Activated CD4-positive, alpha-beta memory T cell treated with anti-CD3 and anti-CD28 coated beads, Interleukin-2, amount 10 ng/mL, durations not matched to agents 7 days and 5 days (primary cell): ENCODE measurements at regions of chr17 and their contacts with region 1.

Region 1: DNA sequence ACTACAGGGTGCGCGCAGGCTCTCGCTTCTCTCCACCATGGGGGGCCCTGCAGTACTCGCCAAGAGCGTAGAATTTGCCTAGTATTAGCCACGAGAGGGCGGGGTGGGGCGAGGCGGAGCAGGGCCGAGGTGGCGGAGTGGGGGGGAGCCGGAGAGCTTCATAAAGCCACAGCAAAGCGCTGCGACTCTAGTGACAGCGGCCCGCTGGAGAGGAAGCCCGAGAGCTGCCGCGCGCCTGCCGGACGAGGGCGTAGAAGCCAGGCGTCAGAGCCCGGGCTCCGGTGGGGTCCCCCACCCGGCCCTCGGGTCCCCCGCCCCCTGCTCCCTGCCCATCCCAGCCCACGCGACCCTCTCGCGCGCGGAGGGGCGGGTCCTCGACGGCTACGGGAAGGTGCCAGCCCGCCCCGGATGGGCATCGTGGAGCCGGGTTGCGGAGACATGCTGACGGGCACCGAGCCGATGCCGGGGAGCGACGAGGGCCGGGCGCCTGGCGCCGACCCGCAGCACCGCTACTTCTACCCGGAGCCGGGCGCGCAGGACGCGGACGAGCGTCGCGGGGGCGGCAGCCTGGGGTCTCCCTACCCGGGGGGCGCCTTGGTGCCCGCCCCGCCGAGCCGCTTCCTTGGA is at the start of gene TBX21:
- DNase-seq: peak; percentile 94
- H3K4me3 Mint-ChIP-seq: peak within 1 kb of the TSS; percentile 100
- H3K27ac Mint-ChIP-seq: peak within 1 kb of the TSS; percentile 99
- H3K4me1 Mint-ChIP-seq: peaks cover 68% of the 10 kb centered on the region
- H3K27me3 Mint-ChIP-seq: no peaks in the 10 kb centered on the region
- total RNA-seq, gene TBX21: 58.3 to 61.1 TPM

Region 2: DNA sequence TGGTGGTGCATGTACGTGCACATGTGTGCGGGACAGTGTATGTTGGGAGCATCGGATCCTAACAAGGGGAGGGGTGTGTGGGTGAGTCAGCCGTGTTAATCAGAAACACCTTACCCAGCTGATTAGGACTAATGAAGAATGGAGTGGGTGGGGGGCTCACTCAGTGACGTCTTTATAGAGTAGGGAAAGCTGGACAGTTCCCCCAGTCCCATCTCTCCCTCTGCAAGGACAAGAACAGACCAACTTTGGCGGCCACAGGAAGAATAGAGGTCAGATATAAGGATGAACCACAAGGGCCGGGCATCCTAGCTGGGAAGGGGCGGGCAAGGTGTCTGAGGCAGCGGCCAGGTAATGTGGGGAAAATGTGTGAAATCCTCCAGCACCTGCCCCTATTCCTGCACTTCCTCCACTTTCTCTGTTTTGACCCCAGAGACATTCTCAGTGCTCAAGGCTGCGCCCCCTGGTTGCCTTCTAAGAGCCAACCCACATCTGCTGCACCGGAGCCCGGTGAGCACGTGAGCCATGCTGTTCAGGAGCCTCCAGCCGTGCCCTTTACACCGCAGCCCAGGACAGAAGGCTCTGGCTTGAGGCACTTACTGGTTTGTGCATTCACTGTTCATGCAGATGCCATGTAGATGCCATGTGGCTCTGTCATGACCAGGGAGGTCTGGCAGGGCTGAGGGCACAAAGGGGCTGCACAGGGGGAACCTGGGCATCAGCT is 19.0 kb before region 1 on chr17:
- CTCF ChIA-PET with region 1: interaction called, 42 read pairs
- POLR2A ChIA-PET with region 1: interaction called, 71 read pairs
- DNase-seq: no peak
- H3K4me3 Mint-ChIP-seq: no peak overlapping the region
- H3K27ac Mint-ChIP-seq: peak overlapping the region; percentile 21
- H3K4me1 Mint-ChIP-seq: peaks cover 73% of the 10 kb centered on the region
- H3K27me3 Mint-ChIP-seq: peaks cover 14% of the 10 kb centered on the region

Region 3: GRCh38 chr17:47720754-47721533 is 12.2 kb before region 1 on chr17:
- CTCF ChIA-PET with region 1: interaction called, 42 read pairs
- POLR2A ChIA-PET with region 1: interaction called, 71 read pairs
- DNase-seq: peak; percentile 93
- H3K4me3 Mint-ChIP-seq: peak overlapping the region; percentile 58
- H3K27ac Mint-ChIP-seq: peak overlapping the region; percentile 78
- H3K4me1 Mint-ChIP-seq: peaks cover 86% of the 10 kb centered on the region
- H3K27me3 Mint-ChIP-seq: peaks cover 2% of the 10 kb centered on the region